Right ventricle myocardium inferior (tissue), 1 donor: ENCODE measurements at regions of chr18 and their contacts with region 1.

Region 1: GRCh38 chr18:42298759-42299675 is 344.0 kb downstream of the PIK3C3 start:
- DNase-seq: peak; percentile 75
- ATAC-seq: peak; percentile 88

Region 2: DNA sequence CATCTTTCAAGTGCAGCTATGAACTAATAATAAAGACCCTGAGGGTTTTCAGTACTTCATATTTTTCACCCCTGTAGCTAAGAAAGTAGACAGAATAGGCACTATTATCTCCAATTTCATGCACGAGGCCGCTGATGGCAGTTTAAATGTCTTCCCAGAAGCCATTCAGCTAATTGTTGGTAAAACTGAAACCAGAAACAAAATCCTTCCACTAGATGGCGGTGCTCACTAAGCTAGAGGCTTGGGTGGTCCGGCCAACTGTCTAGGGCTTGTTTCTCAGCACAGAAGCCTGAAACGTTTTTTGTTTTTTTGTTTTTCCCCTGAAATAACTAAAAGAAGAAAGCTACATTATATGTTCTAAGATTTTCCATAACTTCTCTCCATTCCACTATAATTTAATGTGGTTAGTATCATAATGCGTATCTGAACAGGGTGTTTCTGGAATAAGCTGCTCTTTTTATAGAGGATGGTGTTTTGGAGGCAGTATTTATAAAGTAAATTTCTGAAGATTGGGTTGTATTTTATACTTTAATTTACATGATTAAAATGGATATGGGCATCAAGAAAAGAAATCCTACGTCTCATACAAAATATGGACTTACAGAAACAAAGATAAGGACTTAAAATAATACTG is 184.6 kb before region 1 on chr18:
- intact Hi-C with region 1: loop called (anchors 1 kb)
- DNase-seq: peak; percentile 53
- ATAC-seq: peak; percentile 65

Region 3: GRCh38 chr18:42229211-42230210 is 69.5 kb before region 1 on chr18:
- intact Hi-C with region 1: no loop called
- DNase-seq: no peak
- ATAC-seq: no peak

Region 4: GRCh38 chr18:42620657-42621056 is 321.6 kb after region 1 on chr18:
- intact Hi-C with region 1: no loop called
- DNase-seq: no peak
- ATAC-seq: no peak